K562 (cell line): ENCODE measurements at regions of chr1 and their contacts with region 1.

Region 1: DNA sequence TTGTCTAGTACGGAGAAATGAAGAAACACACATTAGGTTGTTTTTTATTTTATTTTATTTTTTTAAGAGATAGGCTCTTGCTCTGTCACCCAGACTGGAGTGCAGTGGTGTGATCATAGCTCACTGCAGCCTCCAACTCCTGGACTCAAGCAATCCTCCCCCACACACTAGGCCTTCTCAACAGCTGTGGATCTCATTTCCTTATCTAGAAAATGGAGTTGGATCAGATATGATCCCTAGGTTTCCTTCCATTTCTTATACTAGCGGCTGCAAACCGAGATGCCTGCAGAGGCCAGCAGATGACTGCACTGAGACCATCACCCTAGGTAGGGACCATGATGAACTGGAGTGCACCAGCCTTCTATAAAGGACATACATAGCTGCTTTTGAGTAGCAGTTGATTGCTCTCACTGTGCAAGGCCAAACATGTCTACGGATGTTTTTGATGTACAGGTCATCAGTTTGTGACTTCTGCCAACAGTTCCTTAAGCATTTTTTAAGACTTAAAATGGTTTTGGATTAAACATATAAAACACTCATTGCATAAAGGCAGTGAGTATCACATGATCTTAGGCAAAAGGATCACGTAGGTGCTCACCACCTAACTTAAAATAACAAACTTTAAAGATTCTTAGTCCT is 11.4 kb upstream of the KLHL12 start:
- DNase-seq: peak; percentile 62 to 77 (median 66)
- ATAC-seq: peak; percentile 94
- H3K4me3 ChIP-seq: no peak overlapping the region
- H3K27ac ChIP-seq: no peak overlapping the region
- H3K4me1 ChIP-seq: peaks cover 0 to 14% of the 10 kb centered on the region in 2 experiments; a peak in 3 of 5 replicates
- H3K27me3 ChIP-seq: no peaks in the 10 kb centered on the region
- CTCF ChIP-seq: peak; percentile 47 to 75 (median 51); a peak in 5 of 6 replicates
- EP300 ChIP-seq: peak; percentile 68
- POLR2A ChIP-seq: no peak
- RAD21 ChIP-seq: peak; percentile 79 to 84

Region 2: DNA sequence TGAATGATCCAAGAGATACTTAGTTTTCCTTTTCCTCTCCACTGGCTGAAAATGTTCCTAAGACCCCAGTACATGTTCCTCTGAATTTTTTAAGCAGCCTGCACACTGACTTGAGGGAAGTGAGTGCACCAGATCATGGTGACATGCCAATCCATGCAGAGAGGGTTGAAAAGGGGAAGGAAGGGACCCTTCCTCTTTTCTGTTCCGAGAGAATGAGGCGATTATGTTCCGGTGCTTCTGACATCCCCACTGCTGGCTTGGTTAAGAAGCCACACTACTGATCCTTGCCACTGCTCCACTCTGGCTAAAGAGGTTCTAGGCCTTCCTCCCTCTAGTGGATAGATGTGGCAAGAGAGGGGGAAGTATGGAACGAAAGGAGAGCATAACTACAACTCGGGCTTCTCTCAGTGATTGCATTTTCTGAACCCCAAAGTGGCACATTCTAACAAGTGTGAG is 30.5 kb after region 1 on chr1:
- CTCF ChIA-PET with region 1: no interaction called
- POLR2A ChIA-PET with region 1: interaction called, 3 read pairs
- in situ Hi-C with region 1: no loop called
- intact Hi-C with region 1: loop called (anchors 1 kb)
- DNase-seq: peak; percentile 74 to 90 (median 81)
- ATAC-seq: peak; percentile 90
- H3K4me3 ChIP-seq: no peak overlapping the region
- H3K27ac ChIP-seq: no peak overlapping the region; the same call in 2 of the 3 replicates
- H3K4me1 ChIP-seq: peaks cover 20 to 24% of the 10 kb centered on the region in 2 experiments
- H3K27me3 ChIP-seq: no peaks in the 10 kb centered on the region; a peak in 1 of 5 replicates
- CTCF ChIP-seq: peak; percentile 94 to 96 (median 95)
- EP300 ChIP-seq: peak; percentile 41; the same call in 1 of the 2 replicates
- POLR2A ChIP-seq: no peak
- RAD21 ChIP-seq: peak; percentile 69 to 80

Region 3: GRCh38 chr1:203076031-203076511 is 137.7 kb after region 1 on chr1:
- CTCF ChIA-PET with region 1: no interaction called
- POLR2A ChIA-PET with region 1: no interaction called
- in situ Hi-C with region 1: no loop called
- intact Hi-C with region 1: no loop called
- DNase-seq: peak in 1 of 4 experiments; percentile 19
- ATAC-seq: peak; percentile 55
- H3K4me3 ChIP-seq: no peak overlapping the region
- H3K27ac ChIP-seq: no peak overlapping the region
- H3K4me1 ChIP-seq: peaks cover 0 to 10% of the 10 kb centered on the region in 2 experiments; a peak in 2 of 5 replicates
- H3K27me3 ChIP-seq: peaks cover 40 to 79% of the 10 kb centered on the region in 2 experiments
- CTCF ChIP-seq: no peak
- EP300 ChIP-seq: no peak
- POLR2A ChIP-seq: no peak
- RAD21 ChIP-seq: no peak